GM12878 (cell line): ENCODE measurements at regions of chr3 and their contacts with region 1.

Region 1: DNA sequence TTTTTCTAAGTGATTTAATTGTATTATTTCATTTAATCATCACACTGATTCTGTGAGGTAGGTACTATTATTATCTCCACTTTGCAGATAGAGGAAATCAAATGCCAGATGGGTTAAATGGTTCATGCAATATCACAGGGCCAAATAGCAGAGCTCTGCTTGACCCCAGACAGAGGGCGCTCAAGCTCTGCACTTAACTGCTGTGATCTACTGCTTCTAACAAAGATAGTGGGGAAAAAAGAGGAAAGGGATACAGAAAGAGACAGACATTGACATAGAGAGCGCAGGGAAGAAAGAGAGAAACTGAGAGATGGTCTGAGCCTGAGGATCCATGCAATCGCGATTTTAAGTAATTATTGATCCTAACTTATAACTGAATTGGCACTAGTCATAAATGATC is 279.1 kb upstream of the THRB start:
- DNase-seq: no peak
- ATAC-seq: peak; percentile 91
- H3K4me3 ChIP-seq: no peak overlapping the region
- H3K27ac ChIP-seq: no peak overlapping the region
- H3K4me1 ChIP-seq: no peaks in the 10 kb centered on the region
- H3K27me3 ChIP-seq: no peaks in the 10 kb centered on the region
- CTCF ChIP-seq: peak; percentile 66 to 75 (median 66)
- EP300 ChIP-seq: no peak
- POLR2A ChIP-seq: no peak
- RAD21 ChIP-seq: peak; percentile 79

Region 2: GRCh38 chr3:24963762-24964625 is 190.2 kb after region 1 on chr3:
- CTCF ChIA-PET with region 1: no interaction called
- POLR2A ChIA-PET with region 1: no interaction called
- RAD21 ChIA-PET with region 1: no interaction called
- SMC1A ChIA-PET with region 1: no interaction called
- in situ Hi-C with region 1: no loop called
- intact Hi-C with region 1: loop called (anchors 5 kb)
- DNase-seq: no peak
- ATAC-seq: peak; percentile 54; the same call in 2 of the 3 replicates
- H3K4me3 ChIP-seq: no peak overlapping the region
- H3K27ac ChIP-seq: no peak overlapping the region
- H3K4me1 ChIP-seq: no peaks in the 10 kb centered on the region
- H3K27me3 ChIP-seq: no peaks in the 10 kb centered on the region
- CTCF ChIP-seq: peak; percentile 30 to 44 (median 33); a peak in 5 of 6 replicates
- EP300 ChIP-seq: no peak
- POLR2A ChIP-seq: no peak
- RAD21 ChIP-seq: peak; percentile 57

Region 3: DNA sequence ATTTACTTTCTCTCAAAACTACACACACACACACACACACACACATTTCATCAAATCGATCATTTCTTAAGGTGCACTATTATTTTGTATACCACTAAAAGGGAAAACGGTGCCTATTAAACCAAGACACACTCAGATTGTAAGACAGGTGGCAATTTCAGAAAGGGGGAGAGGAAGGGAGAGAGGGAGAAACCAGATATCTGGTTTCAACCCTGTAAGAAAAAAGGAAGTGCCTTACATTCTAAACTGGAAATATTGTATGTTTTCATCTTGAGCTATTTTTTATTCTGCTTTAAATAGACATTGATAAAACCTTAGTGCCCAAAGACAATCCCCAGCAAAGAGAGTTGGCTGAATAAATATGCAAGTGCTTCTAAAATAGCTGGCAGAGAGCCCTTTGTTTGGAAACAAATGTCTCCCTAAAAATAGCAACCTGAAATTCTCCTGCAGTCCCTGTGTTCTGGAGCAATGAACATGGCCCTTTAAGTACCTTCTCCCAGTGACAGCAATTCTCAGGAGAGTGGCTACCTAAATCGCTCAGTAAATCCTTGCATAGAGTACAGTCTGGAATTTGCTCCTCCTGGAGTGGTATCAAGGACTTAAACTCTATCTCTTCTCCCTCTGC is 740.0 kb after region 1 on chr3:
- CTCF ChIA-PET with region 1: no interaction called
- POLR2A ChIA-PET with region 1: no interaction called
- RAD21 ChIA-PET with region 1: no interaction called
- SMC1A ChIA-PET with region 1: no interaction called
- in situ Hi-C with region 1: no loop called
- intact Hi-C with region 1: loop called (anchors 10 kb)
- DNase-seq: no peak
- ATAC-seq: no peak
- H3K4me3 ChIP-seq: no peak overlapping the region
- H3K27ac ChIP-seq: no peak overlapping the region
- H3K4me1 ChIP-seq: no peaks in the 10 kb centered on the region
- H3K27me3 ChIP-seq: no peaks in the 10 kb centered on the region; a peak in 1 of 4 replicates
- CTCF ChIP-seq: no peak
- EP300 ChIP-seq: no peak
- POLR2A ChIP-seq: no peak
- RAD21 ChIP-seq: no peak